ENCODE measurements at regions of chr3 and their contacts with region 1.

Region 1: DNA sequence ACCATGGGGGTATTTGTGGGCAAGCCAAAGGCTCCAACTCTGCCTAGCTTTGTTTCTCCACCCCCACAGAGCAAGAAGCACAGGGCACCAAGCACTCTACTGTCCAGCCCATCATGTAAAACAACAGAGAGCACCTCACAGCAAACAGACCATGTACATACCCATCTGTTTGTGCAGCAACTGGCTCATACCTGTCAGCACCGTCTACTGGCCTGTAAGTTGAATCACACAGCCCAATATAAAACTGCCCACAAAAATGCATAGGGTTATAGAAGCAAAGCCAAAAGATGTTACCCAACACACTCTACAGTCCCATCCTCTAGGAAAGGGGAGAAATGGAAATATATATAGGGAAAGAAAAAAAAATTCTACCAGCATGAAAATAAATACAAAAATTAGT is 139.7 kb upstream of the CPNE4 start:
- DNase-seq: no peak
- ATAC-seq: no peak
- H3K4me3 ChIP-seq: no peak overlapping the region
- H3K27ac ChIP-seq: no peak overlapping the region
- H3K4me1 ChIP-seq: no peaks in the 10 kb centered on the region
- H3K27me3 ChIP-seq: peaks cover 2% of the 10 kb centered on the region
- CTCF ChIP-seq: no peak
- POLR2A ChIP-seq: no peak
- RAD21 ChIP-seq: no peak

Region 2: DNA sequence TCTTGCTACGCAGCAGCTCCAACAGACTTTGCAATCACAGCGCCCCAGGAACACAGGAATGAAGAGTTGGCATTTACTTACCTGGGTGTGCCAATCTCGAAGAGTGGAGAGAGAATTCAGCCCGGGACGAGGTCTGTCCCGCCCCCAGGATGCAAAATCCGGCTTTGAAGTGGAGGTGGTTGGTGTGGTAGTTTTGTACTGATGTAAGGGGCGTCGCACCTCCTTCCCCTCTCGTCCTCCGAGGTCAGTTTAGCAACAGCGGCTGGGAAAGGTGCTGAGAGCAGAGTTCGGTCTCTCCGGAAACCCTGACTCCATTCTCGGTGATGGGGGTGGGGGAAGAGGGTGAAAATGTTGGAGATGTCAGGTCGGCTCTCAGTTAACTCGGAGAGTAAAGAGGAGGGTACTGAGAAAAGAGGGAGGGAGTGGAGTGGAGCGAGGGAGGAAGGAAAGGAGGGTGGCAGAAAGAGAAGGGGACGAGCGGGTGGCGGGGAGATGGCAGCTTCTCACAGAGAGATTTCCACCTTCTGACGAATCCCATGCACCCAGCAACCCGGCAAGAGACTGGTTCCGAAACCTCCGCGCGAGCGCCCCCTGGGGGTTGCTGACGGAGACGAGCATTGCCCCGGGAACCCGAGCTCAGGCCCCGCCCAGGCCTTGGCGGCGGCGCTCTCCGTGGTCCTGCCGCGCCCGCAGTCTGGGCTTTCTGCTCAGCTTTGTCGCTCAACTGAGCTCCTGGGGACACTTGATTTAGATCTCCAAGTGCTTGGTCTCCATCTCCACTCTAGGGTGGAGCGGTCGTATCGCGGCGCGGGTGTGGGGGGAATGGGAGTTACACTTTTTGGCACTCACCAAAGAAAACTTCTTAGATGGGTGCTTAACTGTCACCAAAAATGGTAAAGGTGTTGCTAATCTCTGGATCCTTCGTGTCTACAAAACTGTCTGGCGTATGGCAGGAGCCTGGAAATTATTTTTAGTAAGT is 139.7 kb before region 1 on chr3 and contains the start of gene CPNE4:
- CTCF ChIA-PET with region 1: interaction called, 41 read pairs
- POLR2A ChIA-PET with region 1: no interaction called
- dilution Hi-C with region 1: no loop called
- in situ Hi-C with region 1: loop called (anchors 5 kb)
- intact Hi-C with region 1: no loop called
- DNase-seq: peak; percentile 51
- ATAC-seq: peak; percentile 99
- H3K4me3 ChIP-seq: no peak within 1 kb of the TSS
- H3K27ac ChIP-seq: no peak within 1 kb of the TSS
- H3K4me1 ChIP-seq: no peaks in the 10 kb centered on the region
- H3K27me3 ChIP-seq: peaks cover 19% of the 10 kb centered on the region
- CTCF ChIP-seq: peak; percentile 84
- POLR2A ChIP-seq: no peak
- RAD21 ChIP-seq: peak; percentile 36; the same call in 1 of the 2 replicates
- total RNA-seq, gene CPNE4: not detected in 2 replicates

Region 3: DNA sequence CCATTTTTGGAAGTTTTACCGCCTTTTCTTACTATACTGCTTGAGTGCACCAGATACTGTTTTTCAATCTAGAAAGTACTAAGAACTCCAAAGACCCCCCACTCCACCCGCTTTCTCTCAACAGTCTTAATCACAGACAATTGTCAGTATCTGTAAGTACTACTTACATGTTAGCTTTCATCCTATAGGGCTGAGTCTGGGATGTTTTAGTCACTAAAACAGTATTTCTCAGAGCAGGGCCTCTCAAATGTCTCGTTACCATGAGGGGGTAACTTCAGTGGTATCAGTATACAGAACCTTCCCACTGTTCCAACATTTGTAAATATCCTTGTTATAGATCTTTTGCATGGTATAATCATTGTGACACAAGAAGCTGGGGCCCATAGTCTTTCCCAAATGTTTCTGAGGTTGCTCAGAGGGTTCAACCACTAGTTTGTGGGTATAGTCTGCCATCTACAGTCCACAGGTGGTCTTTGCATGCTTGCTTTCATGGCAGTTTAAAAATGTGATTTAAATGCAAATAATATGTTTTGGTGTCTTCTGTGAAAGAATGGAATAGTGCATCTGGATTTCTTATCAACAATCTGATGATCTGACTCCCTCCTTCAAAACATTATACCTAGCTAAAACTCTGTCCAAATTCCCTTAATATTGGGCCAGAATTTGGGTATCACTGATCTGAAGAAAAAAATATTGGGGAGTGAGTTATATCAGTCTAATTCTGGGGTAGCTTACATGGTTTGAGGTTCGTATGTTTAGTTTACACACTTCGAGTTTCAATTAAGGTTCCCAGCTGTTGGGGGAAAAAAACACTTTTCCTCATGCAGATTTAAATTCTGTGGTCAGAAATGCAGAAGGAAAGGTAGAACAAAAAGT is 224.8 kb after region 1 on chr3:
- CTCF ChIA-PET with region 1: no interaction called
- POLR2A ChIA-PET with region 1: no interaction called
- dilution Hi-C with region 1: no loop called
- in situ Hi-C with region 1: no loop called
- intact Hi-C with region 1: no loop called
- DNase-seq: peak; percentile 68
- ATAC-seq: peak; percentile 98
- H3K4me3 ChIP-seq: no peak overlapping the region
- H3K27ac ChIP-seq: no peak overlapping the region
- H3K4me1 ChIP-seq: no peaks in the 10 kb centered on the region
- H3K27me3 ChIP-seq: peaks cover 2% of the 10 kb centered on the region; the same call in 1 of the 2 replicates
- CTCF ChIP-seq: peak; percentile 93
- POLR2A ChIP-seq: peak; percentile 44; the same call in 1 of the 2 replicates
- RAD21 ChIP-seq: peak; percentile 88